Tibial artery (tissue), 4 donors: ENCODE measurements at regions of chr20 and their contacts with region 1.

Region 1: GRCh38 chr20:20017001-20017843 is at the start of gene NAA20:
- DNase-seq: peak; percentile 90 to 96
- H3K4me3 ChIP-seq: peak within 1 kb of the TSS; percentile 80 to 97
- H3K27ac ChIP-seq: peak within 1 kb of the TSS; percentile 78 to 87
- H3K4me1 ChIP-seq: peaks cover 0 to 35% (median 24%) of the 10 kb centered on the region in 4 donors
- H3K27me3 ChIP-seq: no peaks in the 10 kb centered on the region
- CTCF ChIP-seq: peak; percentile 87 to 91

Region 2: DNA sequence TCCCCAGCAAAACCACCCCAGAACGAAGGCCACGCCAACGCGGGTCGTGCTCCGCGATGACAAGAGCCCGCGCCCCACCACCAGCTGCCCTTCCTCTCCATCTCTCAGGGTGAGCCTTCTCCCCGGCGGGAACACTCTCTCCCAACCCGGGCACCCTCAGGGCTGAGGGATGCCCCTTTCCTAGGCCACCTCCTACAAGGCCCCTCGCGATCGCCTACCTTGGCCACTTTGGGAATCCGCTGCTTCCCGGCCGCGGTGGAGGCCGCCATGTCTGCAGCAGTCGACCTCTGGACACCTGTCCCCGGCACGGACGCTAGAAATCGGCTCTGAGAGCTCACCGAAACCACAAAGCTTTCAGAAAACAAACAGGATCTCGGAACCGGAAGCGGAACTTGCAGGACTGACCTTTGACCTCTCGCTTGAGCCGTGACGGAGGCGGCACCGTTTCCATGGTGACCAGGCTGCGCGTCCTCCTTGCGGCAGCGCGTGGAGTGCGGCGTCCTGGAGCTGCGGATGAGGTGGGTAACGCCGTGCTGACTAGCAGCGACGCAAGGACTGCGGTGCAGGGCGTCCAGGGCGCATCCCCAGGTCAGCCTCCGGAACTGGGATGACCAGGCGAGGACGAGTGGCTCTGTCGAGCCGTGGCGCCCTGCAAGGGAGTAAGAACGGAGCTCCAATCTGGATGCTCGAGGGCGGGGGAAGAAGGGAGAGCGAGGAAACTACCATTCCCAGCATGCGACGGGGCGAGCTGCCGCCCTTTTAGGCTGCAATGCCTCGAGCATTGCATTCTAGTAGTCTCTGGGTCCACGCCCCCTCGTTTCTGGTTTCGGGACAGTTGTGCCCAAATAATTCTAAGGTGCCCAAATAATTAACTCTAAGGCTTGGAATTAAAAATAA is 35.1 kb after region 1 on chr20 and contains the starts of genes CFAP61 and CRNKL1:
- intact Hi-C with region 1: loop called (anchors 5 kb)
- DNase-seq: peak; percentile 94 to 97
- H3K4me3 ChIP-seq: peak within 1 kb of the TSS; percentile 88
- H3K27ac ChIP-seq: peak within 1 kb of the TSS; percentile 88
- H3K4me1 ChIP-seq: peaks cover 0 to 18% (median 12%) of the 10 kb centered on the region in 4 donors
- H3K27me3 ChIP-seq: no peaks in the 10 kb centered on the region
- CTCF ChIP-seq: peak in 1 of 2 experiments; percentile 46